ENCODE measurements at regions of chr1 and their contacts with region 1.

Region 1: DNA sequence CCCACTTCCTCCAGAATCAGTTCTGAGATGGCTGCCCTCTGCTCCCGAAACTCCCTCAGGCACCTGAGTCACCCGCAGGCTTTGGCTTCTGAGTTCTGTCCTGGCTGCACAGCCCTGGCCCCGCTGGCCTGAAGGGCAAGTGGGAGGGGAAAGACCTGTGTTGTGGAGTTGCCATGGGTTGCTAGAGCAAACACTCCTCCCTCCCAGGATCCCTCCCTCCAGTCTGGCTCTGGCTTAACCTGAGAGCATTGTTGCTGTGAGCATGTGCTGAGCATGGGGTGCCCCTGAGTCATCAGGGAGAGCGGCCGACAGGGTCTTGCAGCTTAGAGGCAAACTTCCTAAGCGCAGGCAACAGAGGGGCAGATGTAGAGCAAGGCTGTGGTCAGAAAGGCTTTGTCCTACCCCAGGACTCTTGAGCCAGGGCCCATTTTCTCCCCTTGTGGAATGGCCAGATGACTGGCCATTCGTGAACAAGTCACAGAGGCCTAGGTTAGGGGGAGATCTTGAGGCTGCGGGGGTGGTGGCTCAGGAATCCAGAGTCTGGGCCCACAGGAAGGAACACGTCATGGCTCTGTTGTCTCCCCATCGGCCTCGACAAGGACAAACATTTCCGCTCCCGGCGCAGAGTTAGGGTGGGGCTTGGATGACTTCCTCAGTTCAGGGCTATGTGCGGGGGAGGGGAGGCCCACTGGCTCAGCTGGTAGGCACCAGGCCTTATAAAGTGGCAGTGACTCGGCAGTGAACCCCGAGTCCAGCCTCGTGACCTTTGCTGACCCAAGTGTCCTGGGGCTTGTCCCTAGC is at the start of gene DYNLT4:
- DNase-seq: peak; percentile 97
- H3K4me3 Mint-ChIP-seq: peak within 1 kb of the TSS; percentile 67
- H3K27ac Mint-ChIP-seq: peak within 1 kb of the TSS; percentile 99
- H3K4me1 Mint-ChIP-seq: peaks cover 89% of the 10 kb centered on the region
- H3K27me3 Mint-ChIP-seq: no peaks in the 10 kb centered on the region

Region 2: GRCh38 chr1:44632598-44632997 is 174.9 kb before region 1 on chr1:
- CTCF ChIA-PET with region 1: no interaction called
- DNase-seq: no peak
- H3K4me3 Mint-ChIP-seq: peak overlapping the region; percentile 84
- H3K27ac Mint-ChIP-seq: peak overlapping the region; percentile 97
- H3K4me1 Mint-ChIP-seq: peaks cover 41% of the 10 kb centered on the region
- H3K27me3 Mint-ChIP-seq: no peaks in the 10 kb centered on the region

Region 3: GRCh38 chr1:44730741-44731512 is 76.5 kb before region 1 on chr1 and contains the start of gene RNU5D-1:
- CTCF ChIA-PET with region 1: interaction called, 12 read pairs
- DNase-seq: peak; percentile 97
- H3K4me3 Mint-ChIP-seq: peak within 1 kb of the TSS; percentile 54
- H3K27ac Mint-ChIP-seq: peak within 1 kb of the TSS; percentile 99
- H3K4me1 Mint-ChIP-seq: peaks cover 48% of the 10 kb centered on the region
- H3K27me3 Mint-ChIP-seq: no peaks in the 10 kb centered on the region

Region 4: DNA sequence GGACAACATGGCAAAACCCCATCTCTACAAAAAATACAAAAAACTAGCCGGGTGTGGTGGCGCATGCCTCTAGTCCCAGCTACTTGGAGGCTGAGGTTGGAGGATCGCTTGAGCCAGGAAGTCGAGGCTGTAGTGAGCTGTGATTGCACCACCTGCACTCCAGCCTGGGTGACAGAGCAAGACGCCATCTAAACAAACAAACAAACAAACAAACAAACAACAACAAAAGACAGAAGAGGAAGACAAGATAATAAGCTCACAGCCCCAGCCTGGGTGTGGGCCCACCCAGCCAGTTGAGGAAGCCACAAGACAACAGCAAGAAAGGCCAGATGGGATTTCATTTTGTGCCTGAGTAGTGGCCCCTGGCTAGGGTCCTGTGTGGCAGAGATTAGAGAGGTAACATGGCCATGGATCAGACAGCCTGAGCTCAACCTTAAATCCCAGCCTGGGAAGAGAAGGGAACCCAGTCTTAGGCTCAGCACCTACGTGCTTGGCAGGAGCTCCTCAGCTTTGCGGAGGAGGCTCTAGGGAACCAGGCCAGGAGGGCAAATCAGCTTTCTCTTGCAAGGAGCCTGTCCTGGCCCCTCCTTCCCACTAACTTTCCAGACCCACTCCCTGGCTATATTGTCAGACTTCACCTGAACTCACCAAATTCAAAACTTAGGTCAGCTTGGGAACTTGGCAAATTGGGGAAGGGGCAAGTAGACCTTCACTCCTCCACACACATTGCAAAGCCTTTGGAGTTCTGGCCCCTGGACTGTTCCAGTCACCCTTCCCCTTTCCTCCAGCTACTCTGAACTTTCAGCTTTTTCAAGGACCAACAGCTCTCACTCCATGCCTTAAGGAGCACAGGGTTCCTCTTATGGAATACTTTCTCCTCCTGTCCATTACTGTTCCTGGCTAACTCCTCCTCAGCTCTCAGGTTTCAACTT is 14.4 kb before region 1 on chr1:
- CTCF ChIA-PET with region 1: interaction called, 13 read pairs
- DNase-seq: peak; percentile 17
- H3K4me3 Mint-ChIP-seq: no peak overlapping the region
- H3K27ac Mint-ChIP-seq: no peak overlapping the region
- H3K4me1 Mint-ChIP-seq: peaks cover 3% of the 10 kb centered on the region
- H3K27me3 Mint-ChIP-seq: peaks cover 26% of the 10 kb centered on the region

Region 5: DNA sequence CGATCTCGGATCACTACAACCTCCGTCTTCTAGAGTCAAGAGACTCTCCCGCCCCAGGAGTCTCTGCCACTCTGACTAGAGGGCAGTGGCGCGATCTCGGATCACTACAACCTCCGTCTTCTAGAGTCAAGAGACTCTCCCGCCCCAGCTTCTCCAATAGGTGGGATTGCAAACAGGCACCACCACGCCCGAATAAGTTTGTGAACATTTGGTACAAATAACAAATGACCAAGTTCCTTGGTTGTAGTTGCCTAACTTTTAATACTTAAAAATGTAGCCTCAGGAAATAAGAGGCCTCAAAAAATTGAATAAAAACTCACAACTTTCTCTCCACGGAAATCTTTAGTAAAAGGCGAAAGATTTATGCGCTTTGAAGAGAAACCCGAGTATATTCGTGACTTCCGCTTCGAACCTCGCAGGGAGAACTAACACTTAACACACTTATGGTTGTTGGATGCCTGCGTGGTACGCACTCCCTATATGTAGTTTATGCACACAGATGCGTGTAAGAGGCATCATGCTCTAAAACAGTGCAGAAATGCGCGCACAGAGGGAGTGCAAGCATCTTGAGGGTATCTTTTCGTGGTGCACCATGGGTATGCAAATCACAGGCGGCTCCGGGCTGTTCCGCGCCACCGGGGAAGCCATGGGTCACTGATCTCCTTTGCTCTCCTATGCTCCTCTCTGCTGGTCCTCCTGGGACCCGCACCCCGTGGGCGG is 12.3 kb after region 1 on chr1:
- CTCF ChIA-PET with region 1: interaction called, 39 read pairs
- DNase-seq: peak; percentile 86
- H3K4me3 Mint-ChIP-seq: peak overlapping the region; percentile 88
- H3K27ac Mint-ChIP-seq: peak overlapping the region; percentile 100
- H3K4me1 Mint-ChIP-seq: peaks cover 58% of the 10 kb centered on the region
- H3K27me3 Mint-ChIP-seq: peaks cover 5% of the 10 kb centered on the region

Region 6: GRCh38 chr1:44862829-44863401 is 55.5 kb after region 1 on chr1:
- CTCF ChIA-PET with region 1: no interaction called
- DNase-seq: no peak
- H3K4me3 Mint-ChIP-seq: no peak overlapping the region
- H3K27ac Mint-ChIP-seq: no peak overlapping the region
- H3K4me1 Mint-ChIP-seq: no peaks in the 10 kb centered on the region
- H3K27me3 Mint-ChIP-seq: no peaks in the 10 kb centered on the region

Measured in activated naive CD4-positive, alpha-beta T cell treated with anti-CD3 and anti-CD28 coated beads, Interleukin-2, amount 10 ng/mL, durations not matched to agents 7 days and 5 days (primary cell).